ENCODE measurements at regions of chr1 and their contacts with region 1.

Region 1: DNA sequence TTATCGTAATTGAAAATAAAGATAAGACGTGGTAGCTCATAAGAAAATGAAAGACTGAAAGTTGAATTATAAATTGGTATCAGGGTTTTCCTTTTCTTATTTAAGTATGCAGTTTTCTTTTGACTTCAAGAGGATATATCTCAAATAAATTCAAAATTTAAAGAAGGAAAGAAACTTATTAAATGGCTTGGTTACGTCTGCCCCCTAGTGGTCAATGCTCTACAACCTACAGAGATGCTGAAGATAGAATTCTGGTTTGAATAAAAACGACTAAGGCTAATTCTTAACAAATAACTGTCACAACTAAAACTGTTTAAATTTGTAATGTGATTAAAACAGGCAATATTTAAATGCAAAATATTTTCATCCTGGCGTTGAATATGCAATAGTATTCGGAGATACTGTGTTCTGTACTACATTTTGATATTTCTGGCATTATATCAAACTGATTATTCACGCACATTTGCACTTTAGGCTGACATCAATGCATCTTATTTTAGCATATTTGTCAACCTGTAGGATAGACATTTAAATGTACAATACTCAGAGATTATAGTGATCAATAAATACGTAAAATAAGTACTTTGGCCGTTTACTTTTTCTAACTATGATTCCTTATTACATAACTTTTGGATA is 26.8 kb downstream of the IFI44 start:
- DNase-seq: no peak
- ATAC-seq: peak in 2 of 4 donors; percentile 51 to 73
- H3K4me3 ChIP-seq: no peak overlapping the region
- H3K27ac ChIP-seq: no peak overlapping the region
- H3K4me1 ChIP-seq: no peaks in the 10 kb centered on the region
- H3K27me3 ChIP-seq: no peaks in the 10 kb centered on the region
- CTCF ChIP-seq: peak; percentile 89

Region 2: GRCh38 chr1:78617615-78618026 is 58.8 kb before region 1 on chr1:
- intact Hi-C with region 1: loop called (anchors 1 to 2 kb)
- DNase-seq: peak; percentile 53 to 70
- ATAC-seq: peak; percentile 78 to 95 (median 92)
- H3K4me3 ChIP-seq: peak overlapping the region; percentile 14
- H3K27ac ChIP-seq: no peak overlapping the region
- H3K4me1 ChIP-seq: peaks cover 10% of the 10 kb centered on the region
- H3K27me3 ChIP-seq: no peaks in the 10 kb centered on the region
- CTCF ChIP-seq: peak; percentile 83